IMR-90 (cell line): ENCODE measurements at regions of chr9 and their contacts with region 1.

Region 1: GRCh38 chr9:131253891-131254491 is 22.3 kb downstream of the FAM78A start:
- DNase-seq: peak; percentile 38
- ATAC-seq: no peak
- H3K4me3 ChIP-seq: no peak overlapping the region
- H3K27ac ChIP-seq: no peak overlapping the region
- H3K4me1 ChIP-seq: peaks cover 10% of the 10 kb centered on the region
- H3K27me3 ChIP-seq: no peaks in the 10 kb centered on the region
- CTCF ChIP-seq: no peak
- POLR2A ChIP-seq: no peak
- RAD21 ChIP-seq: no peak

Region 2: DNA sequence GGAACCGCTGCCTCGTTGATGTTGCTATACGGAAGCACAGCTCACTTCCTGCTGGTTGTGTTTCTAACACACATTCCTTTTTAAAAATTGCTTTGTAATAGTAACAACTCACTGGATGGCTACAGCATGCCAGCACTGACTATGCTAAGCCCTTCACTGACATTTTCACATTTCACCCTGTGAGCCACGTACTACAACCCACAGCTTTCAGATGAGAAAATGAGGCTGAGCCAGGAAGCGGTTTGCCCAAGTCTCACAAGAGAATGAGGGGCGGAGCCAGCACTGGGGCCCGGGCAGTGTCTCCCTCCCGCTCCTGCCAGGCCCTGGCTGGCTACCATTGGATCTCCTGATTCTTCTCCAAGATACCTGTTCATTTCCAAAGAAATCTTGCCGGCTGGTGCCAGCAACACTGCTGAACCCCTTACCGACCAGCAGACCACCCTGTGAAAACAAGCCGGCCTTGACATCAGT is 16.0 kb before region 1 on chr9:
- CTCF ChIA-PET with region 1: interaction called, 3 read pairs
- POLR2A ChIA-PET with region 1: interaction called, 22 read pairs
- dilution Hi-C with region 1: no loop called
- in situ Hi-C with region 1: no loop called
- intact Hi-C with region 1: no loop called
- DNase-seq: peak; percentile 88
- ATAC-seq: peak; percentile 95
- H3K4me3 ChIP-seq: no peak overlapping the region
- H3K27ac ChIP-seq: peak overlapping the region; percentile 26; the same call in 1 of the 2 replicates
- H3K4me1 ChIP-seq: peaks cover 7% of the 10 kb centered on the region
- H3K27me3 ChIP-seq: no peaks in the 10 kb centered on the region
- CTCF ChIP-seq: no peak
- POLR2A ChIP-seq: no peak
- RAD21 ChIP-seq: no peak